ENCODE measurements at regions of chr12 and their contacts with region 1.

Region 1: GRCh38 chr12:55973598-55974307 is at the start of gene RAB5B:
- DNase-seq: peak; percentile 99
- ATAC-seq: peak; percentile 91
- H3K4me3 Mint-ChIP-seq: no peak within 1 kb of the TSS
- H3K27ac Mint-ChIP-seq: no peak within 1 kb of the TSS
- H3K4me1 Mint-ChIP-seq: no peaks in the 10 kb centered on the region; the same call in 1 of the 2 replicates
- H3K27me3 Mint-ChIP-seq: no peaks in the 10 kb centered on the region
- CTCF ChIP-seq: no peak
- total RNA-seq, gene RAB5B: 55.0 to 65.8 TPM (median 64.3 TPM) in 3 replicates

Region 2: DNA sequence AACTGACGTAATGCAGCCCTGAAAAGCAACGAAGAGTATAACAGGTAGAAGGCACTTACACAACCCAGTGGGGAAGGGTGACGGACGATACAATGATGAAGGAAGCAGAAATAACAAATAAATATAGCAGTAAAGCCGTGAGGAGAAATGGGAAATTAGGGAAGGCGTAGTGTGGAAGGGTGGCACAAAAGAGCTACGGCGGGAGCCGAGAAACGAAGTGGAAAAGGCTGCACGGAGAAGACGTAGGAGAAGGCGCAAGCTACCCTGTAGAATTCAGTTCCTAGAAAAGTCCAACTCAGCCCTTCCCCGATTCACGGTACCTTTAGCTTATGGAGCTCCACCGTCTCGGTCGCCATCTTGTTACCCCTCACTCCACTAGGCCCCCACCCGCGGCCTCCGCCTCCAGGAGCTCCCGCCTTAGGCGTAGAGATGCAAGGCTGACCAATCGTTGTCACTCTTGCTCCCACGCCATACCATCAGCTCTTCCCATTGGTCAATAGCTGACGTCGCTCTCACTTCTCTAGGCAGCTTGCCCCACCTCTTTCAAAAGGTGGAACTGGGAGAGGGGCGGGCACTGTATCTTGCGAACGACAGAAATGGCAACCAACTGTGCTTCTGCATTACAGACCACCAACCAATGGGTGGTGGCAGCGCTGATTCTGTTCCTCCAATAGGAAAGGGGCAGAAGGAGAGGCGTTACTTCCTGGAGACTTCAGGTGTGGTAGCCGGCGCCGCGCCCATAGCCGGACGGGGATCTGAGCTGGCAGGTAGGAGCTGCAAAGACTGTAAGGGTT is 156.2 kb before region 1 on chr12 and contains the starts of genes ORMDL2 and SARNP:
- CTCF ChIA-PET with region 1: interaction called, 14 read pairs
- POLR2A ChIA-PET with region 1: interaction called, 14 read pairs
- DNase-seq: peak; percentile 96
- ATAC-seq: peak; percentile 96
- H3K4me3 Mint-ChIP-seq: no peak within 1 kb of the TSS; the same call in none of the 2 replicates
- H3K27ac Mint-ChIP-seq: no peak within 1 kb of the TSS; the same call in 1 of the 2 replicates
- H3K4me1 Mint-ChIP-seq: peaks cover 39% of the 10 kb centered on the region
- H3K27me3 Mint-ChIP-seq: no peaks in the 10 kb centered on the region
- CTCF ChIP-seq: no peak
- total RNA-seq, gene ORMDL2: 32.9 to 37.9 TPM (median 34.8 TPM) in 3 replicates
- total RNA-seq, gene SARNP: 98.3 to 102 TPM (median 100 TPM) in 3 replicates

Region 3: DNA sequence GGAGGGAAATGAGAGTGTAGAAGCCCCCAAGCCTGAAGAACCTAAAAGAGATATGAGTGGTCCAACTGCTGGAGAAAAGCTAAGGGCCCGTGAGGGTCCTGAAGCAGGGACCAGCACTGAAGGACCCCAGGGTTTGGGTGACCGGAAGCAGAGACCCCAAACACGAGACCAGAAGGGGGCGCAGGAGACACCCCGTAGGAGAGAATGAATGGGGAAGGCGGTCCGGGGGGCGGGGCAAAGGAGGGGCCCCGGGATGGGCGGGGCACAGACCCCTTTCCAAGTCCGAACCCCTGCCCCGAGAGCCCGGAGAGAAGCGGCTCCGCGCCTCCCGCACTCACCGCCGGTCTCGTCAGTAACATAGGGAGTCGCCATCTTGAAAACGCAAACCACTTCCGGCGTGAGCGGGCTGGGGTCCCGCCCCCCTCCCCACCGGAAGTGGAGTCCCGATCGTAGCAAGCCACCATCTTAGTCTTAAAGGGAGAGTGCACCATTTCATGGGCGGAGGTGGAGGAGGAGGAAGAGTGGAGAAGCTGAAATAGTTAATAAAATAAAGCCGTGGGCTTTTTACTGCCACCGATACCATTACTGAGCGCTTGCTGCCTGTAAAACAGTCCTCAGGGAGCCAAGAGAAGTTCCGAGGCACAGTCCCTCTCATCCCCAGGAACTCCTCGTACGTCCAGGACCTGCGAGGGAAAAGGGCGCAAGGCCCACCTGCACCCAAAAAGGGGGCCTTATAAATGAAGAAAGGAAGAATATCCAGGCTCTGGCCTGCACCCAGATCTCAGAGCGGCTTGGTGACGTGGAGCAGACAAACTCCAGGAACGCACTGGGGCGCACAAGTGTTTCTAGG is 46.8 kb before region 1 on chr12:
- CTCF ChIA-PET with region 1: interaction called, 11 read pairs
- POLR2A ChIA-PET with region 1: interaction called, 4 read pairs
- DNase-seq: peak; percentile 95
- ATAC-seq: peak; percentile 56
- H3K4me3 Mint-ChIP-seq: peak overlapping the region; percentile 94
- H3K27ac Mint-ChIP-seq: peak overlapping the region; percentile 96
- H3K4me1 Mint-ChIP-seq: peaks cover 42% of the 10 kb centered on the region
- H3K27me3 Mint-ChIP-seq: peaks cover 10% of the 10 kb centered on the region
- CTCF ChIP-seq: peak; percentile 51

Region 4: DNA sequence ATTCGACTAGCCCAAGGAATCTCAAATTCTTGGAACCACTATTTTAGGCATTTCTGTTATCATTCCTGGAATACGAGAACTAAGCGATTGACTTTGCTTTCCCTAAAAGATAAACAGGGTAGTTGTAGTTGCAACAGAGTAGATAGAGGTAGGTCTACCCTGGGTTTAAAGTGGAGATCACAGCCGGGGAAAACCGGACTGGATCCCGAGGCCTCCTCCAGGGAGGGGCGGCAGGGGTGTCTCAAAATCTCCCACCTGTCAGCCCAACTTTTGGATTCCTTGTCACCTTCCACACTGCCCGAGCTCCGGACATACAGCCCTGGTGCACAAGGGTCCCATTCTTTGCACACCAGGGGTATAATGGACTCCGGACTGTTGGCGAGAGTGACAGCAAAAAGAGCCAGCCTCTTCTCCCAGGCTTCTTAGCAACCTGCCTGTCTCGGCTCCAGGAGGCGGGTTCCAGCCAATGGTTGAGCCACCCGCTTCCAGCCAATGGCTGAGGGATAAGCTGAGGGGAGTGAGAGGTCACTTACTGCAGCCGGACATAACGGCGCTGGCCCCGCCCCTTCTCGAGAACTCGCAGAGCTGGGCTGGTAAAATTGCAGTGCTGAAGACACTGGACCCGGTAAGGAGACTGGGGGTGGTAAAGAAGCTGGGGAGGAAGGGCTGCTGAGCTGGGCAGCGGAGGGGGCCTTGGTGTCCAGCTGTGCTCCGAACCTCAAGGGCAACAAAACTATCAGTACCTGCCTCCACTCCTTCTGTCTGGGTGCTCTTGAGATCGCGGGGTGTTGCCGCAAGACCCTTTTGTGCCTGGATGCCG is 23.2 kb after region 1 on chr12 and contains the start of gene SUOX:
- CTCF ChIA-PET with region 1: interaction called, 26 read pairs
- POLR2A ChIA-PET with region 1: interaction called, 20 read pairs
- DNase-seq: peak; percentile 96
- ATAC-seq: peak; percentile 99
- H3K4me3 Mint-ChIP-seq: peak within 1 kb of the TSS; percentile 95
- H3K27ac Mint-ChIP-seq: peak within 1 kb of the TSS; percentile 96
- H3K4me1 Mint-ChIP-seq: 0 out of 2 replicates have a peak, but pooled peaks cover 7% of the 10 kb centered on the region
- H3K27me3 Mint-ChIP-seq: no peaks in the 10 kb centered on the region
- CTCF ChIP-seq: no peak
- total RNA-seq, gene SUOX: 20.3 to 23.2 TPM (median 23.2 TPM) in 3 replicates

Region 5: DNA sequence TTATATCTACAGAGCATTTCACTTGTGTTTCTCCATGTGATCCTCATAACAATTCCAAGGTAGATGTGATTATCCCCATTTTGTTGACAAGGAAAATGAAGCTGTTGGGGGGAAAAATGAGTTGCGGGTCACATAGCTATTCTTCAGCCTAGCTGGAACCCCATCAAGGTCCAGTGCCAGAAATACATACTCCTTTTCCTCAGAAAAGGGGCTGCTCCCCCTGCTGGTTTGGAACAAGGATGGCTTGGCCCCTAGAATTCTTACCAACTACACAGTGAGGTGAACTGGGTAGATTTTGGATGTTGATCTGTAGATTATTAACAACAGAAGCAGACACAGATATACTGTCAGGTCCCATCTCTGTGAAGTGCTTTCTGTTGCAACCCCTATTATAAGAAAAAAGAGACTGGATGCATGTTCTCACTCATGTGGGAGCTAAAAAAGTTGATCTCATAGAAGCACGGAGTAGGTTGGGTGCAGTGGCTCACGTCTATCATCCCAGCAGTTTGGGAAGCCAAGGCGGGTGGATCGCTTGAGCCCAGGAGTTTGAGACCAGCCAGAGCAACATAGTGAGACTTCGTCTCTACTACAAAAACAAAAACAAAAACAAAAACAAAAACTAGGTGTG is 56.0 kb after region 1 on chr12:
- CTCF ChIA-PET with region 1: interaction called, 15 read pairs
- POLR2A ChIA-PET with region 1: no interaction called
- DNase-seq: peak; percentile 50
- ATAC-seq: peak; percentile 82
- H3K4me3 Mint-ChIP-seq: no peak overlapping the region
- H3K27ac Mint-ChIP-seq: no peak overlapping the region
- H3K4me1 Mint-ChIP-seq: no peaks in the 10 kb centered on the region
- H3K27me3 Mint-ChIP-seq: no peaks in the 10 kb centered on the region
- CTCF ChIP-seq: peak; percentile 54

Region 6: GRCh38 chr12:56127888-56128669 is 154.3 kb after region 1 on chr12 and contains the start of gene ESYT1:
- CTCF ChIA-PET with region 1: no interaction called
- POLR2A ChIA-PET with region 1: no interaction called
- DNase-seq: peak; percentile 99
- ATAC-seq: peak; percentile 95
- H3K4me3 Mint-ChIP-seq: peak within 1 kb of the TSS; percentile 98
- H3K27ac Mint-ChIP-seq: peak within 1 kb of the TSS; percentile 99
- H3K4me1 Mint-ChIP-seq: peaks cover 30% of the 10 kb centered on the region
- H3K27me3 Mint-ChIP-seq: no peaks in the 10 kb centered on the region; the same call in 1 of the 2 replicates
- CTCF ChIP-seq: no peak
- total RNA-seq, gene ESYT1: 77.7 to 80.8 TPM (median 80.1 TPM) in 3 replicates